ENCODE measurements at regions of chr12 and their contacts with region 1.

Region 1: GRCh38 chr12:92570056-92570753 is 132.6 kb upstream of the PLEKHG7 start:
- DNase-seq: peak; percentile 48 to 71
- H3K4me3 ChIP-seq: no peak overlapping the region
- H3K4me3 Mint-ChIP-seq: no peak overlapping the region
- H3K27ac Mint-ChIP-seq: no peak overlapping the region
- H3K4me1 ChIP-seq: peaks cover 12% of the 10 kb centered on the region
- H3K4me1 Mint-ChIP-seq: peaks cover 7% of the 10 kb centered on the region
- H3K27me3 ChIP-seq: no peaks in the 10 kb centered on the region
- H3K27me3 Mint-ChIP-seq: no peaks in the 10 kb centered on the region
- CTCF ChIP-seq: peak; percentile 54 to 64

Region 2: GRCh38 chr12:91382081-91382543 is 1188.1 kb before region 1 on chr12:
- CTCF ChIA-PET with region 1: interaction called, 4 read pairs
- POLR2A ChIA-PET with region 1: no interaction called
- intact Hi-C with region 1: loop called (anchors 1 kb)
- DNase-seq: peak; percentile 71 to 80
- H3K4me3 ChIP-seq: no peak overlapping the region
- H3K4me3 Mint-ChIP-seq: peak overlapping the region; percentile 36
- H3K27ac Mint-ChIP-seq: no peak overlapping the region
- H3K4me1 ChIP-seq: no peaks in the 10 kb centered on the region
- H3K4me1 Mint-ChIP-seq: no peaks in the 10 kb centered on the region
- H3K27me3 ChIP-seq: no peaks in the 10 kb centered on the region; the same call in 1 of the 2 replicates
- H3K27me3 Mint-ChIP-seq: peaks cover 9% of the 10 kb centered on the region
- CTCF ChIP-seq: peak; percentile 84 to 88

Region 3: GRCh38 chr12:91811481-91812287 is 758.5 kb before region 1 on chr12:
- CTCF ChIA-PET with region 1: no interaction called
- POLR2A ChIA-PET with region 1: no interaction called
- intact Hi-C with region 1: loop called (anchors 1 kb)
- DNase-seq: peak; percentile 43 to 70
- H3K4me3 ChIP-seq: no peak overlapping the region
- H3K4me3 Mint-ChIP-seq: no peak overlapping the region
- H3K27ac Mint-ChIP-seq: no peak overlapping the region
- H3K4me1 ChIP-seq: no peaks in the 10 kb centered on the region
- H3K4me1 Mint-ChIP-seq: no peaks in the 10 kb centered on the region
- H3K27me3 ChIP-seq: no peaks in the 10 kb centered on the region
- H3K27me3 Mint-ChIP-seq: no peaks in the 10 kb centered on the region
- CTCF ChIP-seq: peak; percentile 80 to 83

Region 4: GRCh38 chr12:92356425-92356824 is 213.8 kb before region 1 on chr12:
- CTCF ChIA-PET with region 1: no interaction called
- POLR2A ChIA-PET with region 1: no interaction called
- intact Hi-C with region 1: no loop called
- DNase-seq: no peak
- H3K4me3 ChIP-seq: no peak overlapping the region
- H3K4me3 Mint-ChIP-seq: no peak overlapping the region
- H3K27ac Mint-ChIP-seq: no peak overlapping the region
- H3K4me1 ChIP-seq: no peaks in the 10 kb centered on the region
- H3K4me1 Mint-ChIP-seq: no peaks in the 10 kb centered on the region
- H3K27me3 ChIP-seq: no peaks in the 10 kb centered on the region
- H3K27me3 Mint-ChIP-seq: peaks cover 5% of the 10 kb centered on the region
- CTCF ChIP-seq: no peak

Region 5: DNA sequence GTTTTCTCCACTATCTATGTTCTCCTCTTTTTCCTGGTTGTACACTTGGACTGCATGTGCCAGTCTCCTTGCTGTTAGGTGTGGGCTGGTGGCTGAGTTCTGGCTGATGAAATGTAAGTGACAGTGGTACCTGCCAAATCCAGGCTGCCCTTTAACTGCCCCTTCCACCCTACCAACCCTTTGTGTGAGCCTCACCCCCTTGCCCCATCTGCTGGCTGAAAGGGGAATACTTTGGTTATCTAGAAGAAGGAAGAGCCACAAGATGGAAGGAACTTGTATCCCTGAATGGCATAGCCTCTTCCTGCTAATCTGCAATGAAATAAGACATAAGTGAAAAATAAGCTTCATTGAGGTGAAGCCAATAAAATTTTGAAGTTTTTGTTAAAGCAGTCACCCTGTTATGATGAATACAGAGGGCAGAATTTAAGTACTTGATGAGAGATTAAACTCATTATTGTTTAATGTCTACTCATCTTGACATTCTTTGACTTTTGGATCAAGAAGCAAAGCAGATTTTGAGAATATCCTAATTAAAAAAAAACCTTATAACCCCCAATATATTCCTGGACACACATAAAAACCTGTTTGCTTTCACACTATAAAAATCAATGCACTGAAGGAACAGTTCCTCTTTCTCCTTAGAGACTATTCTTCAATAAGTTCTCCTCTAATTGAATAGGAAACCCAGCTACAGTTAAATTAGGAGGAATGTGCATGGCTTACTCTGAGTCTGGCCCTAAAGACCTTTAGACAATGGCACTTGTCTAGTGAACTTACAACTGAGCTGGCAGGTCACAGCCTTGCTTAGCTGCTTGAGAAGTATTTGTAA is 161.9 kb before region 1 on chr12:
- CTCF ChIA-PET with region 1: no interaction called
- POLR2A ChIA-PET with region 1: no interaction called
- intact Hi-C with region 1: loop called (anchors 5 kb)
- DNase-seq: peak; percentile 52 to 59
- H3K4me3 ChIP-seq: no peak overlapping the region
- H3K4me3 Mint-ChIP-seq: no peak overlapping the region
- H3K27ac Mint-ChIP-seq: no peak overlapping the region
- H3K4me1 ChIP-seq: no peaks in the 10 kb centered on the region
- H3K4me1 Mint-ChIP-seq: no peaks in the 10 kb centered on the region
- H3K27me3 ChIP-seq: no peaks in the 10 kb centered on the region
- H3K27me3 Mint-ChIP-seq: no peaks in the 10 kb centered on the region
- CTCF ChIP-seq: peak; percentile 61 to 64

Region 6: GRCh38 chr12:92502417-92503028 is 67.7 kb before region 1 on chr12:
- CTCF ChIA-PET with region 1: no interaction called
- POLR2A ChIA-PET with region 1: no interaction called
- intact Hi-C with region 1: loop called (anchors 1 kb)
- DNase-seq: no peak
- H3K4me3 ChIP-seq: no peak overlapping the region
- H3K4me3 Mint-ChIP-seq: no peak overlapping the region
- H3K27ac Mint-ChIP-seq: no peak overlapping the region
- H3K4me1 ChIP-seq: no peaks in the 10 kb centered on the region
- H3K4me1 Mint-ChIP-seq: peaks cover 8% of the 10 kb centered on the region
- H3K27me3 ChIP-seq: no peaks in the 10 kb centered on the region; the same call in 1 of the 2 replicates
- H3K27me3 Mint-ChIP-seq: no peaks in the 10 kb centered on the region
- CTCF ChIP-seq: no peak

Region 7: GRCh38 chr12:92556141-92556540 is 14.1 kb before region 1 on chr12:
- CTCF ChIA-PET with region 1: no interaction called
- POLR2A ChIA-PET with region 1: no interaction called
- intact Hi-C with region 1: no loop called
- DNase-seq: no peak
- H3K4me3 ChIP-seq: no peak overlapping the region
- H3K4me3 Mint-ChIP-seq: no peak overlapping the region
- H3K27ac Mint-ChIP-seq: no peak overlapping the region
- H3K4me1 ChIP-seq: peaks cover 33% of the 10 kb centered on the region
- H3K4me1 Mint-ChIP-seq: peaks cover 19% of the 10 kb centered on the region
- H3K27me3 ChIP-seq: no peaks in the 10 kb centered on the region
- H3K27me3 Mint-ChIP-seq: no peaks in the 10 kb centered on the region
- CTCF ChIP-seq: no peak

Region 8: DNA sequence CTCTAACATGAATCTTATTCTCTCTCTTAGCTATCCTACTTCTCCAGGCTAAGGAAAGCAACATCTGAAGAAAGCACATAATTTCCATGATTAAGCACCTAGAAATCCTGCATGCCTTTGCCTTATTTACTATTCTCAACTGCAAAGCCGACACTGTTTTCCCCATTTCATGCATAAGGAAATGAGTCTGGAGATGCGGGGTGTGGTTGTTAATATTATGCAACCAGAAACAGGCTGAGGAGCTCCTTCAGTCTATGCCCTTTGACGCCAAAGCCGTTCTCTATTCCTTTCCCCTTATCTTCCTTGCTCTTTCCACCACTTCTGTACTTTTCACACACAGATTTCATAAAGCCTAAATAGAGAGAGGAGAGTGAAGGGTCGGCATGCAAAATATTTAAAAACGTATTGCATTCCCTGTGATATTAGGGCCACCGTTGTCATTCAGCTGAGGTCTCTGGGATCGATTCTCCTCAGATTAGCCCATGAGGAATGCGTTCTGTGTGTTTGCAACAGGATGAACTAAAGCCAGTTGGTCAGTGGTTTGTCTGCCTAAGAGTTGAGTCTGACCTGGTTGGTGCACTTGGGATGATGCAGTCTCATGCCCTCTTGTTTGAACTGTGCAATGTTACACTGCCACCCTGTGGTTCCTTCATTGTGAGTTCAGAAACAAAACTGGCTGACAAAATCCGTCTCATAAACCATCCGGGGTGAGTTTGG is 79.5 kb after region 1 on chr12:
- CTCF ChIA-PET with region 1: no interaction called
- POLR2A ChIA-PET with region 1: no interaction called
- intact Hi-C with region 1: loop called (anchors 1 kb)
- DNase-seq: peak; percentile 67
- H3K4me3 ChIP-seq: no peak overlapping the region
- H3K4me3 Mint-ChIP-seq: no peak overlapping the region
- H3K27ac Mint-ChIP-seq: no peak overlapping the region
- H3K4me1 ChIP-seq: no peaks in the 10 kb centered on the region
- H3K4me1 Mint-ChIP-seq: no peaks in the 10 kb centered on the region
- H3K27me3 ChIP-seq: no peaks in the 10 kb centered on the region
- H3K27me3 Mint-ChIP-seq: peaks cover 27% of the 10 kb centered on the region
- CTCF ChIP-seq: peak; percentile 54 to 76